ENCODE measurements at regions of chr5 and their contacts with region 1.

Region 1: GRCh38 chr5:127313847-127314473 is 23.4 kb downstream of the MEGF10 start:
- DNase-seq: peak; percentile 52
- ATAC-seq: peak; percentile 95
- H3K4me3 ChIP-seq: no peak overlapping the region
- H3K27ac ChIP-seq: no peak overlapping the region
- H3K4me1 ChIP-seq: no peaks in the 10 kb centered on the region
- H3K27me3 ChIP-seq: peaks cover 15% of the 10 kb centered on the region
- CTCF ChIP-seq: peak; percentile 78
- POLR2A ChIP-seq: no peak
- RAD21 ChIP-seq: peak; percentile 77

Region 2: DNA sequence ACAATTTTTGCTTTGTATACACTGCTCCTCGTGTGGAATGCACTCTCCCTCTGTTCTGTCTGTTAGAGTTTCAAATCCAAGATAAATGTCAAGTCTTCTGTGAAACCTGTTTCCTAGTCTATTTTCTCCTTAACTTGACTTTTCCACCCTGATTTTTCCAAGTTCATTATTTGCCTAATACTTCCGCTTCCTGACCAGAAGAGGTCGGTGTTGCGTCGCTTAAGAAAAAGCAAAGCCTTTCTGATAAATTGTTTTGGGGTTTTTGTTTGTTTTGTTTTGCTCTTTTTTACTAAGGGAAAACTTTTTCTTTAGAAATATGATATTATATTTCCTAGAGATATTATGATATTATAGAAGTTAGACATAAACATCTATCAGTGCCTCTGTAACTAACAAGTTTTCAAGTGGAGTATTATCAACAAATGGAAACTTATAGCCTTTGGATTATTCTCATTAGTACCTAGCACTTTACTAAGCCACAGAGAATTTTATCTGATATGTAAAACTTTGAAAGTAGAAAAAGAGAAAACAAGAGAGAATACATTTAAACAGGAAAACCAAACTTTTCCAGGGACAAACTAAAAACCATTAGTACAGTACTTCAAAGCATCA is 657.5 kb before region 1 on chr5:
- CTCF ChIA-PET with region 1: no interaction called
- POLR2A ChIA-PET with region 1: no interaction called
- dilution Hi-C with region 1: no loop called
- in situ Hi-C with region 1: no loop called
- intact Hi-C with region 1: loop called (anchors 1 kb)
- DNase-seq: peak; percentile 57
- ATAC-seq: peak; percentile 44; the same call in 1 of the 2 replicates
- H3K4me3 ChIP-seq: no peak overlapping the region
- H3K27ac ChIP-seq: no peak overlapping the region
- H3K4me1 ChIP-seq: no peaks in the 10 kb centered on the region
- H3K27me3 ChIP-seq: no peaks in the 10 kb centered on the region
- CTCF ChIP-seq: peak; percentile 94
- POLR2A ChIP-seq: no peak
- RAD21 ChIP-seq: peak; percentile 84

Region 3: GRCh38 chr5:126676195-126676624 is 637.8 kb before region 1 on chr5:
- CTCF ChIA-PET with region 1: no interaction called
- POLR2A ChIA-PET with region 1: no interaction called
- dilution Hi-C with region 1: no loop called
- in situ Hi-C with region 1: loop called (anchors 10 kb)
- intact Hi-C with region 1: no loop called
- DNase-seq: peak; percentile 60
- ATAC-seq: peak; percentile 78
- H3K4me3 ChIP-seq: no peak overlapping the region
- H3K27ac ChIP-seq: no peak overlapping the region
- H3K4me1 ChIP-seq: no peaks in the 10 kb centered on the region
- H3K27me3 ChIP-seq: no peaks in the 10 kb centered on the region; the same call in 1 of the 2 replicates
- CTCF ChIP-seq: peak; percentile 86
- POLR2A ChIP-seq: no peak
- RAD21 ChIP-seq: peak; percentile 82

Region 4: DNA sequence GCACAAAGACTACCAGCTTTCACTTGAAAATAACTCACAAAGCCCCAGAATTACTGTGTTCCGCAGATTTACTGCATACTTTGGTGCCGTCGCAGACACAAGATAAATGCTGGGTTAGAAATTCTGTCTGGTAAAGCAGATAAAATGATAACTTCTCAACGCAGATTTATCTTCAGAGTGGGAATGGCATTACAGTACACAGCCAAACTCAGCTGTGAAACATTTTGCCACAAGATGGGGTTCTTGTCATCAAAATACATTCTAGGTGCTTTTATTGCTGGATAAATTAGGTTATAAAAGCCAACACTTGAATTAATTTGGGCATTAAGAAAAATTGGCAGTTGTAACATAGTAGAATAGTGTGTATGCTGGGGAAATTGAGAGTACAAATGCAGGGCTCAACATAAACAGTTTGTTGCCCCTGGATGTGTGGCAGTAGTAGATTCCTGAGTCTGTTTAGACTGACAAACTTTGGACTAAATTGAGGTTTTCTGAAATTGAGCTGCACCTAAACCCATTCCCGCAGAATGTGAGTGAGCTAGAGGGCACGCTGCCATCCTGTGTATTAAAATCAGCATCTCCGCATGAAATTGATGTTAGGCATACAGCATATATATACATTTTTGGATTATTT is 475.9 kb before region 1 on chr5:
- CTCF ChIA-PET with region 1: interaction called, 4 read pairs
- POLR2A ChIA-PET with region 1: no interaction called
- dilution Hi-C with region 1: no loop called
- in situ Hi-C with region 1: no loop called
- intact Hi-C with region 1: loop called (anchors 1 kb)
- DNase-seq: peak; percentile 53
- ATAC-seq: peak; percentile 61
- H3K4me3 ChIP-seq: no peak overlapping the region
- H3K27ac ChIP-seq: no peak overlapping the region
- H3K4me1 ChIP-seq: no peaks in the 10 kb centered on the region
- H3K27me3 ChIP-seq: no peaks in the 10 kb centered on the region
- CTCF ChIP-seq: peak; percentile 68
- POLR2A ChIP-seq: no peak
- RAD21 ChIP-seq: peak; percentile 69

Region 5: GRCh38 chr5:127030259-127031146 is 283.5 kb before region 1 on chr5 and contains the start of gene MARCHF3:
- CTCF ChIA-PET with region 1: no interaction called
- POLR2A ChIA-PET with region 1: no interaction called
- dilution Hi-C with region 1: no loop called
- in situ Hi-C with region 1: no loop called
- intact Hi-C with region 1: loop called (anchors 2 kb)
- DNase-seq: peak; percentile 96
- ATAC-seq: peak; percentile 98
- H3K4me3 ChIP-seq: peak within 1 kb of the TSS; percentile 83
- H3K27ac ChIP-seq: peak within 1 kb of the TSS; percentile 67
- H3K4me1 ChIP-seq: peaks cover 5% of the 10 kb centered on the region
- H3K27me3 ChIP-seq: no peaks in the 10 kb centered on the region
- CTCF ChIP-seq: peak; percentile 40
- POLR2A ChIP-seq: peak; percentile 95
- RAD21 ChIP-seq: peak; percentile 33; the same call in 1 of the 2 replicates
- total RNA-seq, gene MARCHF3: 17.8 and 18.8 TPM in 2 replicates

Region 6: GRCh38 chr5:127092690-127093089 is 221.3 kb before region 1 on chr5:
- CTCF ChIA-PET with region 1: no interaction called
- POLR2A ChIA-PET with region 1: no interaction called
- dilution Hi-C with region 1: no loop called
- in situ Hi-C with region 1: no loop called
- intact Hi-C with region 1: no loop called
- DNase-seq: peak; percentile 82
- ATAC-seq: peak; percentile 73
- H3K4me3 ChIP-seq: no peak overlapping the region
- H3K27ac ChIP-seq: no peak overlapping the region
- H3K4me1 ChIP-seq: peaks cover 8% of the 10 kb centered on the region
- H3K27me3 ChIP-seq: no peaks in the 10 kb centered on the region
- CTCF ChIP-seq: no peak
- POLR2A ChIP-seq: no peak
- RAD21 ChIP-seq: no peak

Region 7: GRCh38 chr5:127290019-127290945 is 23.7 kb before region 1 on chr5 and contains the start of gene MEGF10:
- CTCF ChIA-PET with region 1: no interaction called
- POLR2A ChIA-PET with region 1: no interaction called
- dilution Hi-C with region 1: no loop called
- in situ Hi-C with region 1: no loop called
- intact Hi-C with region 1: loop called (anchors 1 kb)
- DNase-seq: peak; percentile 17
- ATAC-seq: peak; percentile 74
- H3K4me3 ChIP-seq: peak within 1 kb of the TSS; percentile 12; the same call in 1 of the 2 replicates
- H3K27ac ChIP-seq: no peak within 1 kb of the TSS
- H3K4me1 ChIP-seq: no peaks in the 10 kb centered on the region
- H3K27me3 ChIP-seq: peaks cover 27% of the 10 kb centered on the region
- CTCF ChIP-seq: peak; percentile 69
- POLR2A ChIP-seq: no peak
- RAD21 ChIP-seq: peak; percentile 77
- total RNA-seq, gene MEGF10: not detected in 2 replicates